CD4-positive, alpha-beta memory T cell (primary cell): ENCODE measurements at regions of chr1 and their contacts with region 1.

Region 1: GRCh38 chr1:33430692-33431593 is at the start of gene PHC2:
- DNase-seq: peak; percentile 89 to 97 (median 92)
- H3K4me3 ChIP-seq: peak within 1 kb of the TSS in 1 of 2 donors; percentile 41
- H3K4me3 Mint-ChIP-seq: peak within 1 kb of the TSS; percentile 4 to 83 (median 70)
- H3K27ac ChIP-seq: no peak within 1 kb of the TSS
- H3K27ac Mint-ChIP-seq: peak within 1 kb of the TSS; percentile 53 to 83 (median 65)
- H3K4me1 ChIP-seq: peaks cover 10% of the 10 kb centered on the region
- H3K4me1 Mint-ChIP-seq: peaks cover 2 to 5% (median 4%) of the 10 kb centered on the region in 4 donors
- H3K27me3 ChIP-seq: peaks cover 3% of the 10 kb centered on the region
- H3K27me3 Mint-ChIP-seq: peaks cover 4 to 6% of the 10 kb centered on the region in 2 donors
- total RNA-seq, gene PHC2: 34.5 to 35.6 TPM

Region 2: DNA sequence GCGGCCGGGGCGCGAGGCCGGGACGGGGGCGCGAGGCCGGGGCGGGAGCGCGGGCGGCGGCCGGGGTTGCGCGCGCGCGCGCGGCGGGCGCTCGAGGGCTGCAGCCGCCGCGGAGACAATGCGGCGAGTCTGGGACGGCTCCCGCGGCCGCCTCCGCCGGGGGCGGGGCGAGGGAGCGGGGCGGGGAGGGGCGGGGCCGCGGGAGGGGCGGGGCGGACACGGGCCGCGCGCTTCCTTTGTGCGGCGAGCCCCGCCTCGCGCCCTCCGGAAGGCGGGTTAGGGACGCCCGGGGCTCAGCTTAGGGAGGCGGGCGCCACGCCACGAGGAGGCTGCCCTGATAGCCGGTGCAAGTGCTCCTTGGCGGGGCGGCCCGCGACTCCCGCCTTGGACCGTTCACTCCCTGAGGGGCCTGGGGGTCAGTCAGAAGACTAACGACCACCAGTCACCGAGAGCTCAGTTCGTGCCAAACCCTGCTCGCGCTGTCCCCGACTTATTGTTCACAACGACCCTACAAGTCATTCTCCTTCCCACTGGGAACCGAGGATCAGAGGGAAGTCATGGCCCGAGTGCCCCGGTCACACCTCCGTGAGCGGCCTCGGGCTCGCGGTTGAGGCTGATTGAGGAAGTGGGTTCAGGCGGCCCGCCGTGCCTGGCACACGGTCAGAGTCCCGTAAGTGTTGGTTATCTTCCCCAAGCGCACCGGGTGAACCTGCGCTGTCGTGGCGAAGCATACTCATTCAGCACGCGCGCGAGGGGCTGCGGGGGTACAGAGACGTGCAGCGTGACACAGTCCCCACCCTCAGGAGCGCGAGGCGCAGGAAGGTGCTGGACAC is 80.9 kb before region 1 on chr1:
- CTCF ChIA-PET with region 1: no interaction called
- POLR2A ChIA-PET with region 1: no interaction called
- intact Hi-C with region 1: loop called (anchors 5 kb)
- DNase-seq: peak; percentile 73 to 82 (median 78)
- H3K4me3 ChIP-seq: peak overlapping the region; percentile 82 to 84
- H3K4me3 Mint-ChIP-seq: peak overlapping the region; percentile 87 to 93 (median 91)
- H3K27ac ChIP-seq: peak overlapping the region; percentile 65
- H3K27ac Mint-ChIP-seq: peak overlapping the region; percentile 79 to 95 (median 91)
- H3K4me1 ChIP-seq: peaks cover 47% of the 10 kb centered on the region
- H3K4me1 Mint-ChIP-seq: peaks cover 25 to 54% (median 42%) of the 10 kb centered on the region in 4 donors
- H3K27me3 ChIP-seq: no peaks in the 10 kb centered on the region
- H3K27me3 Mint-ChIP-seq: no peaks in the 10 kb centered on the region

Region 3: GRCh38 chr1:33396188-33397124 is 34.5 kb before region 1 on chr1:
- CTCF ChIA-PET with region 1: no interaction called
- POLR2A ChIA-PET with region 1: no interaction called
- intact Hi-C with region 1: no loop called
- DNase-seq: no peak
- H3K4me3 ChIP-seq: no peak overlapping the region
- H3K4me3 Mint-ChIP-seq: peak overlapping the region in 2 of 8 donors; percentile 4 to 39
- H3K27ac ChIP-seq: no peak overlapping the region
- H3K27ac Mint-ChIP-seq: no peak overlapping the region
- H3K4me1 ChIP-seq: peaks cover 6% of the 10 kb centered on the region
- H3K4me1 Mint-ChIP-seq: peaks cover 0 to 11% (median 9%) of the 10 kb centered on the region in 4 donors
- H3K27me3 ChIP-seq: no peaks in the 10 kb centered on the region
- H3K27me3 Mint-ChIP-seq: peaks cover 9 to 10% of the 10 kb centered on the region in 2 donors